ENCODE measurements at regions of chr6 and their contacts with region 1.

Region 1: GRCh38 chr6:121055572-121056163 is 278.6 kb downstream of the TBC1D32 start:
- DNase-seq: no peak
- H3K4me3 ChIP-seq: no peak overlapping the region
- CTCF ChIP-seq: peak; percentile 51

Region 2: DNA sequence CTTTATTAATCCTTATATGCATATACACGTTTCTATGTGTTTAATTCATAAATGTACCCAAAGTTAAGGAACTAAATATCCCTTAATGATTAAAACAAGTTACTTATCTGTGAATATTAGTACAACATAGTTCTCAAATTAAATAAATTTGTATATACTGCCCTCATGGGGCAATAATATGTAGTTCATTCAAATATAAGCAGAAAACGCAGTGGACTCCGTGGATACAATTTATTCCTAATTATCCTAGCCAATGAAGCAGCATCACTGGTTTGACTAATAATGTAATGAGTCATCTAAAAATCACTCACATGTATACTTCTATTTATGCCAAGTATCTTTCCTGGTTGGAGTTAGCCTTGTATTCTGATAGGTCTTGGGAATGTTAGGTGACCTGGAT is 167.0 kb after region 1 on chr6:
- CTCF ChIA-PET with region 1: interaction called, 26 read pairs
- POLR2A ChIA-PET with region 1: no interaction called
- DNase-seq: peak; percentile 5
- H3K4me3 ChIP-seq: no peak overlapping the region
- CTCF ChIP-seq: peak; percentile 6

Region 3: DNA sequence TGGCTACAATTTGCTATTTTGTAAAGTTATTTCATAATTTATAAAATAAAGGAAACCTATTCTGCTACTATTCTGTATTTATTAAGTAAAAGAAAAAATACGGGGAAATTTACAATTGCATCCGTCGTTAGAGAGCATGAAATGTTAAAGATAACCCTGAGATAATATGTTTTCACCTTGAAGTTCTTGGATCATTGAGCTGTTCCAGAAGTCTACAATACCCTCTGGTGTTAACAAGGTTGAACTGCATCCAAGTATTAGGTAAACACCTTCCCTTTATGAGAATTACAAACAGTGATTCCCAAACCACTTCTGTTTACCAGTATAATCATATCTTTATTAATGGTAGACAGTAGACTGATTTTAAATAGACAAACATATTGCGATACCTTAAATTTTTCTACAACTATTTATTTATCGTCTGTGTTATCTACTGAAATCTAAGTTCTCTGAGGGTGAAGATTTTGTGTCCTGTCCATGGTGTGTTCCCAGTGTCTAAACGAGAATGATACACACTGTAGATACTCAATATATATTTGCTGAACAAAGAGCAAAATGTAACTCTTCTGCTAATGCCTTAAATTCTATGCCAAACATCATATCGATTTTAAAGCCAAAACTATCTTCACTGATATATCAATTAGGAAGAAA is 250.4 kb after region 1 on chr6:
- CTCF ChIA-PET with region 1: interaction called, 68 read pairs
- POLR2A ChIA-PET with region 1: no interaction called
- DNase-seq: no peak
- H3K4me3 ChIP-seq: no peak overlapping the region
- CTCF ChIP-seq: peak; percentile 49

Region 4: GRCh38 chr6:121399966-121400365 is 344.3 kb after region 1 on chr6:
- CTCF ChIA-PET with region 1: interaction called, 43 read pairs
- POLR2A ChIA-PET with region 1: no interaction called
- DNase-seq: no peak
- H3K4me3 ChIP-seq: no peak overlapping the region
- CTCF ChIP-seq: no peak